ENCODE measurements at regions of chr19 and their contacts with region 1.

Region 1: DNA sequence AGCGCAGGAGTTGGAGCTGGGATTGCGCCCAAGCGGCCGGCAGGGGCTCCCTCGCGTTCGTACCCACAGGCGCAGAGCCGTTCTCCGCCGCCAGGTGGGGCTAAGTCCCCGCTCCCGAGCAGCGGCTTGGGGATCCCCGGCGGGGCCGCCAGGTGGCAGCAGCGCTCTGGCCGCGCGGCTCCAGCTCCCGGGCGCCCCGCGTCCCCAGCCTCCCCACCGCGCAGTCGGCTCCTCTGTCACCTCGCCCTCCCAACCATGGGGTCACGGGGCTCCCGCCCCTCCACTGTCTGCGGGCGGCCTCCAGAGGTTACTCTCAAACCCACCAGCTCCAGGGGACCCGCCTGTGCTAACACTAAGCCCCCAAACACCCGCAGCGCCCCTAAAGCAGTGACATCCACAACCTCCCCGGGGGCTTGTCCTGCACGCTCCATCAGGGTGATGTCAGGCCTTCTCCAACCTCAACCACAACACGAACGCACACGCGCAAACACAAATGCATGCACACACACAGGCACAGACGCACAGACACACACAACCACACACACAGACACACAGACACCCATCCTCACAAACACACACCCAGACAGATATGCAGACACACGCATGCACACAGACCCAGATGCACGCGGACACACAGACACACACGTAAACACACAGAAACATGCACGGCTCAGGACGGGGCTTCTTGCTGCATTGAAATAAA is 18.4 kb upstream of the KCTD15 start:
- DNase-seq: peak; percentile 63
- H3K4me3 ChIP-seq: no peak overlapping the region
- H3K27ac ChIP-seq: no peak overlapping the region
- H3K4me1 ChIP-seq: no peaks in the 10 kb centered on the region
- H3K27me3 ChIP-seq: peaks cover 3% of the 10 kb centered on the region
- CTCF ChIP-seq: peak; percentile 100
- POLR2A ChIP-seq: no peak

Region 2: DNA sequence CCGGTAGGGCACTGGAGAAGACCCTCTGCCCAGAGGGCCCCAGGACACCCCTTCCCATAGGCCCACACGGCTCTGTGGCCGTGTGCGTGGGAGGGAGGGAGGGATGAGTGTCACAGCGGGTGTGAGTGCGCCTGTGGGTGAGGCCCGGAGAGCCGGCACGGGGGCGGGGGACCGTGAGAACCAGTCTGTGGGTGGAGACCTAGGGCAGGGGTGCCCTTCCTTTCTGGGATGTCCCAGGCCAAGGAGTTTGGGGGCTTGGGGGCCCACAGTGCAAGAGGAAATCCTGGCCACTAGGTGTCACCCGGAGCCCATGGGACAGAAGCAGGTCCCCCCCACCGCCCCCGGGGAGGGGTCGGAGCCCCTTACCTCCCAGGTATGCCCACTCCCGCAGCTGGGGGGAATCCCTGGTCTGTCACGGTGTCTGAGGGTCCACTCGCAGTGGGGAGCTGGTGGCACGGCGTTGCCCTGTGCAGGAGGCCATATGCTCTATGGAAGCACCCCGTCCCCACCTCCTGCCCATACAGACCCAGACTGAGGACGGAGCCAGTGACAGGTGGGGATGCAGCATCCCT is 536.6 kb before region 1 on chr19:
- intact Hi-C with region 1: no loop called
- DNase-seq: no peak
- H3K4me3 ChIP-seq: no peak overlapping the region
- H3K27ac ChIP-seq: no peak overlapping the region
- H3K4me1 ChIP-seq: no peaks in the 10 kb centered on the region
- H3K27me3 ChIP-seq: no peaks in the 10 kb centered on the region
- CTCF ChIP-seq: peak; percentile 50 to 92 (median 86)
- POLR2A ChIP-seq: no peak

Region 3: GRCh38 chr19:33927789-33928457 is 149.7 kb after region 1 on chr19:
- intact Hi-C with region 1: no loop called
- DNase-seq: no peak
- H3K4me3 ChIP-seq: no peak overlapping the region
- H3K27ac ChIP-seq: no peak overlapping the region
- H3K4me1 ChIP-seq: no peaks in the 10 kb centered on the region
- H3K27me3 ChIP-seq: no peaks in the 10 kb centered on the region
- CTCF ChIP-seq: no peak
- POLR2A ChIP-seq: no peak

Region 4: DNA sequence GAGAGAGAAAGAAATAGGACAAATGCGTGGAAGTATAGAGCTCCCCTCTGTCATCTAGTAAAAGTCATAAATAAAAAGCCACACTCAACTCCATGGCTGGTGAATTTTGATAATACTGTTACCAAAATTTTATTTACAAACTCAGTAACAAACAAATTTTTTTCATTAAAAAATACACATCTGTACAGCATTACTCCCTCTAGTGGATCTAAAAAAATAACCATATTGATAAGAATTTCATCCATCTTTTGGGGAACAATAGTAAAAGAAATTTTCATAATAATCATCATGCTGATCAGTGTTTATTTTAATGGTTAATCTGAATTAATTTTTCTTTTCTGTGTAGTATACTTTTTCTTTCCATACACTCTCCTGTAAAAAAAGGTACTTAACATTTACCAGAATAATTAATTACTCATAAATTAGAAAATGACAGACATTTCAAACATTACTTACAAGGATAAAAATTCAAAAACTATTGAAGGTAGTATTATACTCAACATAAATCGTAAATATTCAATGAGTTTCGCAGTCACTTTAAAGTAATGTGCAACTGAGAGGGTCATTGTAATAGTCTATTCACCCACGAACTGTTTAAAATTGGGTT is 220.6 kb after region 1 on chr19:
- intact Hi-C with region 1: loop called (anchors 5 kb)
- DNase-seq: no peak
- H3K4me3 ChIP-seq: no peak overlapping the region
- H3K27ac ChIP-seq: no peak overlapping the region
- H3K4me1 ChIP-seq: no peaks in the 10 kb centered on the region
- H3K27me3 ChIP-seq: no peaks in the 10 kb centered on the region
- CTCF ChIP-seq: peak; percentile 24 to 53 (median 44)
- POLR2A ChIP-seq: no peak

Region 5: GRCh38 chr19:34096020-34096915 is 318.0 kb after region 1 on chr19:
- intact Hi-C with region 1: loop called (anchors 5 kb)
- DNase-seq: peak; percentile 16
- H3K4me3 ChIP-seq: no peak overlapping the region
- H3K27ac ChIP-seq: no peak overlapping the region
- H3K4me1 ChIP-seq: no peaks in the 10 kb centered on the region
- H3K27me3 ChIP-seq: no peaks in the 10 kb centered on the region
- CTCF ChIP-seq: peak in 3 of 4 experiments; percentile 77 to 81 (median 77)
- POLR2A ChIP-seq: no peak

Region 6: DNA sequence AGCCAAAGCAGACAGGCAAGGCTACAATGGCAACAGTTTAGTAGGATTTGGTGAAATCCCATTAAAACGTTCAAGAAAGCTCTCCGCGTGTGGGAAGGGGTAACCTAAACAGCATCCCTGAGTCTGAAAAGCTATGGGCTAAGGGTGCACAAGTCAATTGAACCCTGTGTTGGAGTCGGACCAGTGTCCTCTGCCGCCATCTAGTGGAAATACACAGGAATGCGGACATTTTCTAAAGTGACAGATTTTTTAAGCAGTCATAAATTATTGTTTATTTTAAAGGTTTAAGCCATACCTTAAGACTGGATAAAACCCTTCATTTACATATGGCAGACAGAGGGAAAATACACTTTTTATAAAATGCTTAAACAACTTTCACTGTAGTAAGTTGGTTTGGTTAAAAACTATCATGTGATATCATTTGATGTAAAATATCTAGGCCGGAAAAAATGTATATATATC is 367.5 kb after region 1 on chr19:
- intact Hi-C with region 1: loop called (anchors 5 kb)
- DNase-seq: peak; percentile 17
- H3K4me3 ChIP-seq: no peak overlapping the region
- H3K27ac ChIP-seq: no peak overlapping the region
- H3K4me1 ChIP-seq: no peaks in the 10 kb centered on the region
- H3K27me3 ChIP-seq: no peaks in the 10 kb centered on the region
- CTCF ChIP-seq: peak; percentile 70 to 81 (median 74)
- POLR2A ChIP-seq: no peak